PC-3 (cell line): ENCODE measurements at regions of chr2 and their contacts with region 1.

Region 1: DNA sequence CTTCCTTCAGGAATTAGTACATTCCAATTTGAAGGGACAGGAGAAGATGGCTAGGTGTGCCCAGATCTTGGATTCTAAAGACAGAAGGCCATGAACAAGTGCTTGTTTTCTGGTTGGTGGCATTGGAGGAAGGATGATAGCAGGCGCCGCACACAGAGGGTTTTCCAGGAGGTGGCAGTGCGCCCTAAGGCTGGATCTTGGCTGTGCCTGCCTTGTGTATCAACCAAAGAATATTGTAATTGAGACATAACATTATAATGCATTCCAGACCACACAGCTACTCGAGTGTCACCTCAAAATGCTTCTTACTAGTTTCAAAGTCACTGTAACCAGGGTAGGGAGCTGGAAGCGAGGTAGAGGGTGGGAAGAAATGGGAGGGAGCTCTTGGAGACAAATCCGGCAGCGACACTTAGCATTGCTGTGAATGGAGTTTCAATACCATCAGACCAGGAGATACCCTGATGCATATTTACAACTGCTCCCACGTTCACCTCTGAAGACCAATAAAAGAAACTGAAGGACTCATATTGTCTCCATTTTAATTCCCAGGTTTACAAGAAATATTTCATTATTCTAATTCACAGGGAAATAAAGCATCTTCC is 42.5 kb downstream of the CPO start:
- DNase-seq: peak; percentile 82
- ATAC-seq: peak; percentile 82
- H3K4me3 ChIP-seq: no peak overlapping the region
- H3K27ac ChIP-seq: no peak overlapping the region
- H3K4me1 ChIP-seq: peaks cover 30% of the 10 kb centered on the region
- H3K27me3 ChIP-seq: no peaks in the 10 kb centered on the region
- CTCF ChIP-seq: peak; percentile 93

Region 2: GRCh38 chr2:206611191-206611590 is 370.6 kb before region 1 on chr2:
- CTCF ChIA-PET with region 1: no interaction called
- POLR2A ChIA-PET with region 1: no interaction called
- intact Hi-C with region 1: no loop called
- DNase-seq: peak; percentile 89
- ATAC-seq: peak; percentile 64
- H3K4me3 ChIP-seq: peak overlapping the region; percentile 41
- H3K27ac ChIP-seq: peak overlapping the region; percentile 88
- H3K4me1 ChIP-seq: peaks cover 51% of the 10 kb centered on the region
- H3K27me3 ChIP-seq: no peaks in the 10 kb centered on the region
- CTCF ChIP-seq: no peak

Region 3: DNA sequence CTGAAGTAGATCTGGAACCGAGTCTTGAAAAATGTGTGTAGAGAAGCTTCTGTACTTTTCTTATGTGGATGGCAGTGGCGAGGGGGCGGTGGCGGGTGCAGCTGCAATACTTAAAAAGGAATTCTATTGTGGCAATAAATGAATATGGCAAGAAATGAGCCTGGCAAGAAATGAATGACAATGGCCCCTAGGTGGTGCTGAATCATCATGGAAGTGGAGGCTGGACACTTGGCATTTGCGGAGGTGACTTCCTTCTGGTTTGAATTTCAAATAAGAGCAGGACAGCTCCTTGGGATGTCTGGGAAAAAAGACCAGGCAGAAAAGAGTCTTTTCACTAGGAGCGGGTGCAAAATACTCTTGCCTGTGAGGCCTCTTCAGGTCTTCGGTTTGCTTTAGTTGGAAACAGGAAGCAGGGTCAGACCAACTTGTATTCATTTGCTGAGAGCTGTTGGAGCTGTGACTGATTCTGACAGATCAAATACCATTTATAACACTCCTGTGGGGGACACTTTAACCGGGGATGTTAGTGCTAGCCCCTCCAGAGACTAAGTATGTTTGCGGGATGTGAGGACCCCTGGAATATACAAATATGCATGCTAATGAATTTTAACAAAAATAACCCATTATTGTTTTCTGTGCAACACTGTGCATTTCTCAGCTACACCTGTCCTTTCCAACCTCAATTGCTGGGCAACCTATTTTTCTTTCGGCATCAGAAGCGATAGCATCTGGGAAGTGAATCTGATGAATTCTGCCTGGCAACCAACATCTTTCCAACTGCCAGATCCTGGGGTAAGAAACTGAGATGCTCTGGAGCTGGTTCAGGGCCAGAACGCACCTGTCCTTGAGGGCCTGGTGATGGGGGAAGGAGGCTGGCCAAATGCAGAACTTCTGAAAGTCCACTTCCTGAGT is 181.1 kb before region 1 on chr2:
- CTCF ChIA-PET with region 1: no interaction called
- POLR2A ChIA-PET with region 1: no interaction called
- intact Hi-C with region 1: loop called (anchors 1 kb)
- DNase-seq: peak; percentile 82
- ATAC-seq: peak; percentile 84
- H3K4me3 ChIP-seq: no peak overlapping the region
- H3K27ac ChIP-seq: no peak overlapping the region
- H3K4me1 ChIP-seq: 0 out of 2 replicates have a peak, but pooled peaks cover 6% of the 10 kb centered on the region
- H3K27me3 ChIP-seq: no peaks in the 10 kb centered on the region
- CTCF ChIP-seq: peak; percentile 89

Region 4: DNA sequence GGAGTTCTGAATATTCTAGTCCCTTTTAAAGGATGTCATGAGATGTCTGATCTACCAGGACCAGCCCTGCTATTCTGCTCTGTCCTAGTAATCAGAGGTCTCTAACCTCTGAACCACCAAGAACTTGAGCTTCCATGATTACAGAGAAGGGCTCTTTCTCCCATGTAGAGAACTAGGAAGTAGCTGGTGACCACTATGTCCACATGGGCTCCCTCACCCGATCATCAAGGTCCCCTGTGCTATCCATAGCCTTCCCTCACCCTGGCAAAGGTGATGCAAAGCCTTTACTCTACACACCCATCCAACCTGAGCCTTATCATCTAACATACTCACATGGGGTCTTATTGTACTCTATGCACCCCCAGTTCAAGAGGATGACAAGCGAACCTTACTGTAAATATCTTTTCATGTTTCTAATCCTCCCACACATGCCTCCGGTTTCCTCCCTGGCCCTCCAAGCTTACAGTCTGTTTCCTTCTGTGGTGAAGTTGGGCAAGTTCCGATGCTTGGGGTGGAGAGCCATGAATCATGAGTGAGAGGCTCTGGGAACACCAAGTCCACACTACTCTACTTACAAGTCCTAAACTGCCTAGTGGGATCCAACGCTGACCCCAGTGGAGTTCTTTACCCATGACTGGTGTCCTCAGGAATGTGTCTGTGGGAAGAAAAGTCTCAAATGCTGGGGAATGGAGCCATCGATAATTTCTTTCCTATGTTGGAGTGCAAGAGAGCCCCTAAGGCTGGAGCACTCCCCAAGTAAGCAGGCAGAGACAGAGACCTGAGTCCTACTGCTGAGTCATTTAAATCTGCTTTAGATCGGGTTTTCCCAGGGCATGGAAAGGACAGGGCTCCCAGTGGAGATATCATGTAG is 257.2 kb after region 1 on chr2:
- CTCF ChIA-PET with region 1: no interaction called
- POLR2A ChIA-PET with region 1: no interaction called
- intact Hi-C with region 1: loop called (anchors 5 kb)
- DNase-seq: peak; percentile 84
- ATAC-seq: peak; percentile 63
- H3K4me3 ChIP-seq: no peak overlapping the region
- H3K27ac ChIP-seq: peak overlapping the region; percentile 73
- H3K4me1 ChIP-seq: peaks cover 30% of the 10 kb centered on the region
- H3K27me3 ChIP-seq: no peaks in the 10 kb centered on the region
- CTCF ChIP-seq: no peak

Region 5: GRCh38 chr2:207341804-207342203 is 360.0 kb after region 1 on chr2:
- CTCF ChIA-PET with region 1: no interaction called
- POLR2A ChIA-PET with region 1: no interaction called
- intact Hi-C with region 1: loop called (anchors 1 kb)
- DNase-seq: peak; percentile 18
- ATAC-seq: 0 out of 2 replicates have a peak, but pooled peaks have one; percentile 29
- H3K4me3 ChIP-seq: no peak overlapping the region
- H3K27ac ChIP-seq: no peak overlapping the region
- H3K4me1 ChIP-seq: peaks cover 9% of the 10 kb centered on the region
- H3K27me3 ChIP-seq: no peaks in the 10 kb centered on the region
- CTCF ChIP-seq: peak; percentile 27